B cell (primary cell): ENCODE measurements at regions of chr5 and their contacts with region 1.

Region 1: GRCh38 chr5:134541736-134542376 is 16.4 kb downstream of the JADE2 start:
- DNase-seq: no peak
- ATAC-seq: no peak
- H3K4me3 ChIP-seq: no peak overlapping the region
- H3K4me3 Mint-ChIP-seq: peak overlapping the region; percentile 78
- H3K27ac ChIP-seq: peak overlapping the region; percentile 87 to 95
- H3K27ac Mint-ChIP-seq: peak overlapping the region; percentile 91
- H3K4me1 ChIP-seq: peaks cover 74 to 75% of the 10 kb centered on the region in 2 donors
- H3K4me1 Mint-ChIP-seq: peaks cover 70% of the 10 kb centered on the region
- H3K27me3 ChIP-seq: no peaks in the 10 kb centered on the region
- H3K27me3 Mint-ChIP-seq: no peaks in the 10 kb centered on the region
- CTCF ChIP-seq: no peak

Region 2: DNA sequence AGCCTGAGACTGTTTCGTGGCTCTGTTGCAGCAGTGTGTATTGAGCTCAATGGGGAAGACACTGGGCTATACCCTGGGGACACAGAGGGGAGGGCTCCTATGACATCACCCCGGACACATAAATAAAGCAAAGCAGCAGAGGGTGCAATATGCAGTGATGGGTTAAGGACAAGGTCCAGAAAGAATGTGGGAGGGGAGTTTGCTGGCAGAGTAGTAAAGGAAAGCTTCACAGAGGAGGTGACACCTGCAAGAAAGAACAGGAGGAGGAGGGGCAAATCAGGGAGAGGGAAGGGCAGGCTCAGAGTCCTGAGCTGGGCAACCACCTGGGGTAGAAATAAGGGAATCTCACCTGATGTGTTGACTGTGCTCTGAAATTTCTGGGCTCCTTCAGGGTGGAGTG is 94.9 kb before region 1 on chr5:
- CTCF ChIA-PET with region 1: interaction called, 3 read pairs
- POLR2A ChIA-PET with region 1: interaction called, 4 read pairs
- intact Hi-C with region 1: loop called (anchors 5 kb)
- DNase-seq: peak; percentile 84
- ATAC-seq: peak; percentile 86
- H3K4me3 ChIP-seq: peak overlapping the region in 1 of 5 experiments; percentile 38
- H3K4me3 Mint-ChIP-seq: peak overlapping the region; percentile 79
- H3K27ac ChIP-seq: peak overlapping the region; percentile 47 to 52
- H3K27ac Mint-ChIP-seq: peak overlapping the region; percentile 87
- H3K4me1 ChIP-seq: peaks cover 37 to 42% of the 10 kb centered on the region in 2 donors
- H3K4me1 Mint-ChIP-seq: peaks cover 56% of the 10 kb centered on the region
- H3K27me3 ChIP-seq: no peaks in the 10 kb centered on the region
- H3K27me3 Mint-ChIP-seq: no peaks in the 10 kb centered on the region
- CTCF ChIP-seq: no peak

Region 3: DNA sequence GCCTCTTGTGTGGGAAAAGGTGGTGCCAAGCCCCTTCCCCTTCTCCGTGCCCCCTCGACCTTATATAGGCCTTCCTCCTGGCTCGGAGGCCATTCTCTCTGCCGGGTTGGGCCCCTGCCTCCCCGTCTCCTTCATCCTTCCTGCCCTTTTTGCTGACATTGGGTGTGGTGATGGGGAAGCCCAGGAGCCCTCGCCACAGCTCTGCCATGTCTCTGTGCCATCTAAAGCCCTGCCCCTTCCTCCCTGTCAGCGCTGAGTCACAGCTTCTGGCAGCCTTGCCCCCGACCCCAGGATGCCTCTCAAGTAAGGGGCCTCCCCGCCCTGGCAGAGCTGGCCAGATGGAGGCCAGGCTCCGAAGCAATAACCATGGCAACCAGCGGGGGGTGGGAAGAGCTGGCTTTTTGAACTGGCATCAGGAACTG is 14.0 kb after region 1 on chr5:
- CTCF ChIA-PET with region 1: interaction called, 36 read pairs
- POLR2A ChIA-PET with region 1: interaction called, 66 read pairs
- intact Hi-C with region 1: loop called (anchors 1 kb)
- DNase-seq: peak; percentile 83
- ATAC-seq: peak; percentile 64
- H3K4me3 ChIP-seq: peak overlapping the region in 1 of 5 experiments; percentile 32
- H3K4me3 Mint-ChIP-seq: peak overlapping the region; percentile 83
- H3K27ac ChIP-seq: peak overlapping the region; percentile 86 to 98
- H3K27ac Mint-ChIP-seq: peak overlapping the region; percentile 97
- H3K4me1 ChIP-seq: peaks cover 37 to 58% of the 10 kb centered on the region in 2 donors
- H3K4me1 Mint-ChIP-seq: peaks cover 62% of the 10 kb centered on the region
- H3K27me3 ChIP-seq: no peaks in the 10 kb centered on the region
- H3K27me3 Mint-ChIP-seq: no peaks in the 10 kb centered on the region
- CTCF ChIP-seq: no peak

Region 4: GRCh38 chr5:134749415-134749814 is 207.6 kb after region 1 on chr5:
- CTCF ChIA-PET with region 1: no interaction called
- POLR2A ChIA-PET with region 1: interaction called, 13 read pairs
- intact Hi-C with region 1: no loop called
- DNase-seq: no peak
- ATAC-seq: no peak
- H3K4me3 ChIP-seq: no peak overlapping the region
- H3K4me3 Mint-ChIP-seq: no peak overlapping the region
- H3K27ac ChIP-seq: peak overlapping the region in 1 of 2 donors; percentile 46
- H3K27ac Mint-ChIP-seq: peak overlapping the region; percentile 55
- H3K4me1 ChIP-seq: peaks cover 4 to 6% of the 10 kb centered on the region in 2 donors
- H3K4me1 Mint-ChIP-seq: peaks cover 7% of the 10 kb centered on the region
- H3K27me3 ChIP-seq: no peaks in the 10 kb centered on the region
- H3K27me3 Mint-ChIP-seq: no peaks in the 10 kb centered on the region
- CTCF ChIP-seq: no peak